Heart right ventricle (tissue), 16 donors: ENCODE measurements at regions of chr6 and their contacts with region 1.

Region 1: DNA sequence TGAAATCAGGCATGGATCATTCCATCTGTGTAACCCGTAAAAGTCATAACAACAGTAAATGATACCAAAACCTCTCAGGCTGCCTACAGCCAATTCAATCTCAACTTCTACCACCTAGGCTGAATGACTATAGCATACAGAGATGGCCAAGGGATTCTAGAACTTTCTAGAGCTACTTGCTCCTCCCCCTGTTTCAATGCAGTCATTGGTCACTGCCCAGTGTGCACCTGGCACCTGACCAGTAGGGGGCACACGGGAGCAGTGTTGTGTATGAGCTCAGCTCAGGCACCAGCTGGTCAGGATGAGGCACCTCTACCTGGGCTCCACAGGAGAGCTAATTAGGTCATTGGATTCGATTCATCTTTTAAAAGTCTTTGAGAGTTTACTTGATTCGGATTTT is 86.2 kb downstream of the PLEKHG1 start:
- DNase-seq: peak in 1 of 2 donors; percentile 36
- ATAC-seq: peak in 1 of 8 donors; percentile 17
- H3K4me3 ChIP-seq: peak overlapping the region in 2 of 10 donors; percentile 57 to 59
- H3K27ac ChIP-seq: peak overlapping the region in 8 of 10 donors; percentile 43 to 94 (median 84)
- H3K4me1 ChIP-seq: peaks cover 2 to 74% (median 39%) of the 10 kb centered on the region in 9 donors
- H3K27me3 ChIP-seq: no peaks in the 10 kb centered on the region
- CTCF ChIP-seq: peak; percentile 30 to 68 (median 60)

Region 2: DNA sequence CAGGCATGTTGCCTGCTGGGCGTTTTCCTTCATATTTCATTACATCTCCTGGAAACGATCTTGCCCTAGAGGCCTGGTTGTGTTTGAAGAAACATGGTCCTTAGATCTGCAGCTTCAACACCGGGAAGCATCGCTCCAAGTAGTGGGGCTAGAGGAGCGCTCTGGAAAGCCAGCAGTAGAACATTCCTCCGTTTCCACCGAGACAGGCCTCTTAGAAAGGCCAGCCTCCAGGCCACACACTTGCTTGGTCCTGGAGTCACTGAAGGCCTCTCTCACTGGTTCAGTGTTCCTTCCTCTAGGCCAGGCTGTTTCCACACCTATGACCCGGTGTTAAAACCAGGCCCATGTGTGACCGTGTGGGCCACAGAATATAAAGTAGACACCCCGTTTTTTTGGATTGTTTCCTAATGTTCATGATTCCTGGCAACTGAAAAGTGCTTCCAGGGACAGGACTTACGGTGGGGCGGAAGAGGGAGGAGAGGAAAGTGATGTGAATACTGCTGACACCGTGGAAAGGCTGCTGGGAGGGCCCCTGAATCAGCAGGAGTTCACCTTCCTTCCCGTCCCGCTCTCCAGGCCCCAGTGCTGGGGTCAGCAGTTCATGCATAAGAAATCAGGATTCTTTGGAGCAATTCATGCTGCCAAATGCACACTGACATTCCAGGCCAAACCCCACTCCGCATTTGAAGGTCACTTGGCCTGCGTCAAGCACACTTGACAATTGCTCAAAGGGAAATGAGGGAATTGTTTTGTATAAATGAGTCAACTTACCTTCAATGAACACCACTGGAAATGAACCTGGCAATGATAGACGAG is 233.2 kb before region 1 on chr6:
- intact Hi-C with region 1: loop called in 1 of 10 experiments (anchors 2 kb)
- DNase-seq: peak; percentile 34 to 81
- ATAC-seq: peak; percentile 85 to 97 (median 94)
- H3K4me3 ChIP-seq: no peak overlapping the region
- H3K27ac ChIP-seq: peak overlapping the region; percentile 65 to 92 (median 78)
- H3K4me1 ChIP-seq: peaks cover 0 to 25% (median 8%) of the 10 kb centered on the region in 9 donors
- H3K27me3 ChIP-seq: no peaks in the 10 kb centered on the region
- CTCF ChIP-seq: no peak

Region 3: GRCh38 chr6:150606168-150606591 is 79.7 kb before region 1 on chr6:
- intact Hi-C with region 1: loop called in 4 of 10 experiments (anchors 5 kb)
- DNase-seq: no peak
- ATAC-seq: peak in 1 of 8 donors; percentile 42
- H3K4me3 ChIP-seq: no peak overlapping the region
- H3K27ac ChIP-seq: peak overlapping the region in 3 of 10 donors; percentile 46 to 57 (median 50)
- H3K4me1 ChIP-seq: peaks cover 0 to 62% (median 10%) of the 10 kb centered on the region in 9 donors
- H3K27me3 ChIP-seq: peaks cover 0 to 16% (median 5%) of the 10 kb centered on the region in 7 donors
- CTCF ChIP-seq: no peak

Region 4: GRCh38 chr6:150720774-150721233 is 34.9 kb after region 1 on chr6:
- intact Hi-C with region 1: loop called in 1 of 10 experiments (anchors 5 kb)
- DNase-seq: no peak
- ATAC-seq: peak in 6 of 8 donors; percentile 18 to 67 (median 54)
- H3K4me3 ChIP-seq: no peak overlapping the region
- H3K27ac ChIP-seq: peak overlapping the region in 1 of 10 donors; percentile 21
- H3K4me1 ChIP-seq: peaks cover 0 to 47% (median 6%) of the 10 kb centered on the region in 9 donors
- H3K27me3 ChIP-seq: no peaks in the 10 kb centered on the region
- CTCF ChIP-seq: peak in 1 of 9 donors; percentile 5

Region 5: DNA sequence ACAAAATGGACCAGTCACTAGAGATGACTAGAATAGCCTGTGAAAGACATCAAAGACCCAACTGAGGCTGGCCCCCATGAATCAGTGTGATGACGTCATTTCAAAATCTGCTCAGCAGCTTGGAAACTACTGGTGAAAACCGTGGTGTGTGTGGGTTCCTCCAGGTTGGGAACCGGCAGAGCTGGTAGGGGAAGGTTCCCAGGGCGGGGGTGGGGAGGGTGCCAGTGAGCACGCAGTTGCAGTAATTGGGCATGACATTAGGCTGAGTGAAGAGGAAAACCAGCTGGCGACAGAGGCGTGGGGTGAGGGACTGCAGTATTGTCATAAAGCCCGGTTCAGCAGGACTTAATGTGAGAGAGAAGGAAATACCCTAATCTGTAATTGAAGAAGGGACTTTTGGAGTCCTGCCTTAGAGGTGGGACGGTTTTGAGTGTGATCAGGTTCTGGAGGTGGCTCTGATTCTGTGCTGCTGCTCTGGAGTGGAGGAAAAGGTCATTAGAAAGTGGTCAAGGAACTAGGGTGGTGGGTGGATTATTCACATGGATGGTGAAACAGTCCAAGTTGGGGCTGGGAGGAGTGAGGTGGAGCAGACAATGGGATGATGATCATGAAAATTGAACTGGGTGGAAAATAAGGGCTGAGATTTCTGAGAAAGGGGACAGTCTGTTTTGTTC is 127.6 kb after region 1 on chr6:
- intact Hi-C with region 1: loop called in 3 of 10 experiments (anchors 5 to 10 kb)
- DNase-seq: no peak
- ATAC-seq: peak; percentile 12 to 62 (median 36)
- H3K4me3 ChIP-seq: no peak overlapping the region
- H3K27ac ChIP-seq: peak overlapping the region in 9 of 10 donors; percentile 34 to 77 (median 59)
- H3K4me1 ChIP-seq: peaks cover 0 to 35% (median 12%) of the 10 kb centered on the region in 9 donors
- H3K27me3 ChIP-seq: peaks cover 0 to 5% (median 0%) of the 10 kb centered on the region in 7 donors
- CTCF ChIP-seq: no peak